Activated CD4-positive, alpha-beta T cell treated with anti-CD3 and anti-CD28 coated beads, Interleukin-2, amount 10 ng/mL, durations not matched to agents 7 days and 5 days (primary cell): ENCODE measurements at regions of chr13 and their contacts with region 1.

Region 1: DNA sequence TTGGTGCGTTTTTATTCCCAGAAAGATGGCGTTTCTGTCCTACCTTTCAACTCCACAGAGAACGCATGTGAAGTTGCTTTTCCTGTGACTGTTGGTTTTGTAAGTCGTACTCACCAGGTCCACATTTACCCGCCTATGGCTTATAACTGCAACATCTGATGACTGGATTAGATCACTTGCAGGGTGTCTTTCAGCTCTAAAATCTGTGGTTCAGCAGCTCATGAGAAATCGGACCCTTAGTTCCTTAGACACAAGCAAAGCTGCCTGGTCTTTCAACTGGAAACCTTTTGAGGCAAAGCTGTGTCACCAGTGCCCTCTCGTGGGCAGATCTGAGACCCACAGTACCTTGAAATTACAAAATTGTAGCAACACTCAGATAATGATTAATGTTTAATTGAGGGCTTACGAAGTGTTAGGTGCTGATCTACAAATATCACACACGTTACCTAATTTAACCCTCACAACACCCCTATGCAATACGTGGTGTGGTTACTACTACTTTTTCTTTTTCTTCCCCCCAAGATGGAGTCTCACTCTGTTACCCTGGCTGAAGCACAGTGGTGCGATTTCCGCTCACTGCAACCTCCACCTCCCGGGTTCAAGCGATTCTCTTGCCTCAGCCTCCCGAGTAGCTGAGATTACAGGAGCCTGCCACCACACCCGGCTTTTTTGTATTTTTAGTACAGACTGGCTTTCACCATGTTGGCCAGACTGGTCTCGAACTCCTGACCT is 65.4 kb downstream of the RUBCNL start:
- DNase-seq: peak; percentile 81
- H3K4me3 Mint-ChIP-seq: peak overlapping the region; percentile 71
- H3K27ac Mint-ChIP-seq: peak overlapping the region; percentile 91
- H3K4me1 Mint-ChIP-seq: peaks cover 30% of the 10 kb centered on the region
- H3K27me3 Mint-ChIP-seq: no peaks in the 10 kb centered on the region

Region 2: DNA sequence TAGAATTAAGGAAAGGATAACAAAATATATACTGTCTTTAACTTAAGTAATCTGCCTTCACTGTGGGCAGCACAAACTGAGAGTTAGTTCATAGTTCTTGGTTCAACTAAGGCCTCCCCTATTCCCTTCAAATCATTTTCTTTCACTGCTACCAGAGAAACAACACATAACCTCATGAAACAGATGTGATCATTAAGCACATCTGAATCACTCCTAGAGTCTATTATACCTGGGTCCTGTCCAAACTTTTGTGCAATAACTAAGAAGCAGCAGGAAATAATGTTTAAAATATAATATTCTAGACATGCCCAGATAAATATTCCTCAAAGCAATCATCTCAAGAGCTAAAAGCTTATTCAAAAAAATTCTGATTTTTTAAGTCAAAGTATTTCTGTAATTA is 332.1 kb before region 1 on chr13:
- CTCF ChIA-PET with region 1: no interaction called
- POLR2A ChIA-PET with region 1: no interaction called
- DNase-seq: no peak
- H3K4me3 Mint-ChIP-seq: no peak overlapping the region
- H3K27ac Mint-ChIP-seq: no peak overlapping the region
- H3K4me1 Mint-ChIP-seq: no peaks in the 10 kb centered on the region
- H3K27me3 Mint-ChIP-seq: no peaks in the 10 kb centered on the region

Region 3: GRCh38 chr13:46160471-46161066 is 161.1 kb before region 1 on chr13:
- CTCF ChIA-PET with region 1: interaction called, 11 read pairs
- POLR2A ChIA-PET with region 1: no interaction called
- DNase-seq: peak; percentile 66
- H3K4me3 Mint-ChIP-seq: peak overlapping the region; percentile 55
- H3K27ac Mint-ChIP-seq: peak overlapping the region; percentile 78
- H3K4me1 Mint-ChIP-seq: peaks cover 59% of the 10 kb centered on the region
- H3K27me3 Mint-ChIP-seq: no peaks in the 10 kb centered on the region

Region 4: GRCh38 chr13:46334035-46334822 is 12.6 kb after region 1 on chr13:
- CTCF ChIA-PET with region 1: interaction called, 10 read pairs
- POLR2A ChIA-PET with region 1: no interaction called
- DNase-seq: no peak
- H3K4me3 Mint-ChIP-seq: no peak overlapping the region
- H3K27ac Mint-ChIP-seq: no peak overlapping the region
- H3K4me1 Mint-ChIP-seq: peaks cover 39% of the 10 kb centered on the region
- H3K27me3 Mint-ChIP-seq: no peaks in the 10 kb centered on the region

Region 5: GRCh38 chr13:46936525-46936924 is 614.9 kb after region 1 on chr13:
- CTCF ChIA-PET with region 1: no interaction called
- POLR2A ChIA-PET with region 1: no interaction called
- DNase-seq: no peak
- H3K4me3 Mint-ChIP-seq: no peak overlapping the region
- H3K27ac Mint-ChIP-seq: no peak overlapping the region
- H3K4me1 Mint-ChIP-seq: no peaks in the 10 kb centered on the region
- H3K27me3 Mint-ChIP-seq: peaks cover 4% of the 10 kb centered on the region